Heart left ventricle (tissue), 16 donors: ENCODE measurements at regions of chr17 and their contacts with region 1.

Region 1: DNA sequence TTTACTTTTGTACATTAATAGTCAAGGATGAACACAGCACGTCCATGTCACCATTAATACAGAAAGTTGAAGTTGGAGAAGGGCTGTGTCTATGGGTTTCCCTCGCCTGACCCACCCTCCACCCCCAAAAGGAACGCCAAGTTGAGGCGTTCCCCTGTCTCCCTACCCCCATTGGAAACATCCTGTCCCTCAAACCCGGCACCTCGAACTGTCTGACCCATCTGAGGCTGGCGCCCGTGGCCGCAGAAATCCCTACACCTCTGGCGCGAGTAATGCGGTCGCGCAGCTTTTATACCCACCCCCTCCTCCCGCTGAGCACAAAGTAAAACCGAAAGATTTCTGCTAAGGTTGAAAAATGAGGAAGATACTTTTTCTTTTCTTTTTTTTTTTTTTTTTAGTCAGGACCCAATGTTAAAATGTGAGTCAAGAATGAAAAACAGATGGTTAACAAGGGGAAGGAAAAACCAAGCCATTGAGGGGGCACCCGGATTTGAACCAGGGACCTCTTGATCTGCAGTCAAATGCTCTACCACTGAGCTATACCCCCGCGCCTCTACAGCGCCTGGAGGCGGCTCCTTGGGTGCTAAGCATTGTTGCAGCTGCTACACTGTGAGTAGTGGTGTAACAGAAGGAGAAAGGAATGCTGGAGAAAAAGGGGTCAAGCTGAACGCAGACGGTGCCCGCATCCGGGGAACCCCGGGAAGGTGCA is 887 bp upstream of the LASP1 start:
- DNase-seq: peak; percentile 86 to 90 (median 90)
- ATAC-seq: peak; percentile 74 to 80 (median 75)
- H3K4me3 ChIP-seq: peak overlapping the region; percentile 65 to 100 (median 84)
- H3K27ac ChIP-seq: peak overlapping the region; percentile 93 to 99 (median 96)
- H3K4me1 ChIP-seq: peaks cover 13 to 45% (median 34%) of the 10 kb centered on the region in 12 donors
- H3K27me3 ChIP-seq: no peaks in the 10 kb centered on the region
- CTCF ChIP-seq: peak in 7 of 12 donors; percentile 18 to 61 (median 33)
- POLR2A ChIP-seq: no peak

Region 2: DNA sequence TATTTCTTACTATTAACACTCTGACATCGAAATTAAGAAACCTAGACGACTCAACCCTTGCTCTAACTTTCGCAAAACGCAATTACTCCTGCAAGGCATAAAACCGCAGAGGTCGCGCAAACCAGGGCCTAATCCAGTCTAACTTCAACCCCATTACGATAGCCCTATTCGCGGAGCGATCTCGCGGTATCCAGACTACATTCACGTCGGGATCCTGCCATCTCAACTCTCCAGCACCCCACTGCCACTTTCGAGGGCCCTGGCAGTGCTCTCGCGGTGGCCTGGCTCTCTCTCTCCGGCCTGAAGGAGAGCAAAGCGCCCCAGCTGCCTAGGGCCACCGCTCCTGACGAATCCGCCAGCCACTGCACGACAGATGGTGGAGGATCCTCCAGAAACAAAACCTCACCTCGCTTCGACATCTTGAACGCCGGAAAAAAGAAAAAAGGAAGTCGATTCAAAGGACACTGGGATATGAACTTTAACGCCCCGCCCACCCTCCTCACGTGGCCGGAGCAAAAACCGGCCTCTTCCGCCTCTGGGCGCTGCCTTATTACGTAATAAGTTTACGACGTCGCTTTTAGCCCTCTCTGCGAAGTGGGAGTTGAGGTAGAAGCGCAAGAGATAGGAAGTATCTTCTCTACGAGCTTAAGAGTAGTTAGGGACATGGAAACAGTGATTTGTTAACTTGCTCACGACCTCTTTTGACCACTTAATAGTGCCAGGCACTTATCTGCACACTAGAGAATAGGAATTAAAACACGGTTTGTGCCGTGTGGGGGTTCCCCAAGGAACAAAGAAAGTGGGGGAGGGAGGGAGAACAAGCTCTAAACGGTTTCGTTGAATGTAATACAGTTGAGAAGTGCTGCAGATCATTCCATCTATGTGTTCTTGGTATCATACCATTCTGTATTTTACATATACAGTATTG is 15.4 kb before region 1 on chr17 and contains the start of gene RPL23:
- intact Hi-C with region 1: loop called in 3 of 10 experiments (anchors 1 kb)
- DNase-seq: peak; percentile 93 to 97 (median 96)
- ATAC-seq: peak; percentile 96 to 98 (median 97)
- H3K4me3 ChIP-seq: peak within 1 kb of the TSS; percentile 48 to 82 (median 70)
- H3K27ac ChIP-seq: peak within 1 kb of the TSS; percentile 82 to 97 (median 93)
- H3K4me1 ChIP-seq: peaks cover 9 to 33% (median 26%) of the 10 kb centered on the region in 12 donors
- H3K27me3 ChIP-seq: no peaks in the 10 kb centered on the region
- CTCF ChIP-seq: no peak
- POLR2A ChIP-seq: peak in 1 of 2 donors; percentile 84
- total RNA-seq, gene RPL23: 698 to 1,018 (median 826) TPM

Region 3: DNA sequence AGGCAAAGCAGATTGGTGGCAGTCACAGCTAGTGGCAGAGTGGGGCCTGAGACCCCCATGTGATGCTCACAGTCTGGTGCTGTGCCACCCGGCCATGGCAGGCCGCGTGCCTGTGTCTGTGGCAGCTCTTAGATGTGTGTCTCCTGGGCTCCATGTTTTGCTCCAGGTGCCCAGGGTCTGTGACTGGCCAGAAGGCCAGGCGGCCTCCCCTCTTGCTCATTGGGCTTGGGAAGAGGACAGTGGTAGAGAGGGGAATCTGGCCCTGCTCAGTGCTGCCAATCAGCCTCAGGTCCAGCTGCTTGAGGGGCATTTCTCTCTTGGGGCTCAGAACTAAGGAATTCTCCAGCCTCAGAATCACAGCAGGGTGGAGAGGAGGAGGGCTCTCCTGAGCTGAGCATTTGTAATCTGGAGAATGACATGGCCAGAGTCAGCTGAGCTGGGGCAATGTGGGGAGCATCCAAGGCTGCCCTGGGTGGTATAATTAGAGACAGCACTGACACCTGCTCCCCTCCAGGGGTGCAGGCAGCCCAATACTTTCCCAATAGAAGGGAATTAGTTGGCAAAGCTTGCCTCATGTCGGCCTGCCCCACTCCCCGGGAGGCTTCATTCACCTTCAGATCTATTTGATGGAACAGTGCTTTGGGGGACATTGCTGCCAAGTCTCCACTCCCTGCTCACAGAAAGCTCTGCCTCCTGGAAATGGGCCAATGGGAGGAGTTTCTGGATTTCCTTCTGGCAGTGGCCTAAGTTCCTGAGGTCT is 53.7 kb after region 1 on chr17:
- intact Hi-C with region 1: loop called in 4 of 10 experiments (anchors 2 to 5 kb)
- DNase-seq: peak in 4 of 5 donors; percentile 79 to 89 (median 82)
- ATAC-seq: peak; percentile 26 to 70 (median 66)
- H3K4me3 ChIP-seq: no peak overlapping the region
- H3K27ac ChIP-seq: peak overlapping the region in 11 of 12 donors; percentile 1 to 84 (median 44)
- H3K4me1 ChIP-seq: peaks cover 3 to 67% (median 47%) of the 10 kb centered on the region in 12 donors
- H3K27me3 ChIP-seq: no peaks in the 10 kb centered on the region
- CTCF ChIP-seq: no peak
- POLR2A ChIP-seq: no peak

Region 4: DNA sequence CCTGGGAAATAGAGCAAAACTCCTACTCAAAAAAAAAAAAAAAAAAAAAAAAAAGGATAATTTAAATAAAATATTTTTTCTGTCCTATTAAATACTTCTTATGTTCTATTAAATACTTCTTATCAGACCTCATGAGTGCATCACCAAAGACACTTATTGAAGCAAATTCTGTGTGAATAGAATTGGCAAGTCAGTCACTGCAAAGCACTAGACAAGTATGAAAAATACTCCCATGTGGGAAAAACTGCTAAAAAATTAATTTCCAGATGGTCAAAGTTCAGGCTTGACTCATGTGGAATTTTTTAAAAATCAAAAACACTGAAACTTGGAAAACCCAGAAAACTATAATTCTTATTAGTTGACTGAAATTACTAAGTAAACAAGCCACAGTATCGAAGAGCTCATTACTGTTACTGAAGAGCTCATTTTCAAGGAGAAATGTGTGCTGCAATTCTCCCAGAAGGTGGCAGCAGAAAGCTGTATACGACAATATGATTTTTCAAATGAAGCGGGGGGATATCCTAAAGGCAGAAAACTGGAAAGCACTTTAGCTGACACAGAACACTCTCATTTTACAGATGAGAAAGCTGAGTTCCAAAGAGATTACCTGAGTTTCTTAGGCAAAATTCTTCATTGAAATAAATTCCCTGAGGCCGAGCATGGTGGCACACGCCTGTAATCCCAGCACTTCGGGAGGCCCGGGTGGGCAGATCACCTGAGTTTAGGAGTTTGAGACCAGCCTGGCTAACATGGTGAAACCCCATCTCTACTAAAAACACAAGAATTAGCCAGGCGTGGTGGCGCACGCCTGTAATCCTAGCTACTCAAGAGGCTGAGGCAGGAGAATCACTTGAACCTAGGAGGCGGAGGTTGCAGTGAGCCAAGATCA is 114.1 kb after region 1 on chr17:
- intact Hi-C with region 1: loop called in 1 of 10 experiments (anchors 5 kb)
- DNase-seq: peak in 3 of 5 donors; percentile 39 to 54 (median 42)
- ATAC-seq: peak in 3 of 4 donors; percentile 69 to 79 (median 76)
- H3K4me3 ChIP-seq: no peak overlapping the region
- H3K27ac ChIP-seq: peak overlapping the region in 5 of 12 donors; percentile 8 to 75 (median 59)
- H3K4me1 ChIP-seq: peaks cover 0 to 19% (median 0%) of the 10 kb centered on the region in 12 donors
- H3K27me3 ChIP-seq: no peaks in the 10 kb centered on the region
- CTCF ChIP-seq: peak; percentile 66 to 88 (median 82)
- POLR2A ChIP-seq: no peak